ENCODE measurements at regions of chr12 and their contacts with region 1.

Region 1: GRCh38 chr12:9750276-9751203 is 10.2 kb downstream of the CD69 start:
- DNase-seq: peak in 1 of 2 donors; percentile 87
- ATAC-seq: peak; percentile 41 to 80 (median 68)
- H3K4me3 ChIP-seq: no peak overlapping the region
- H3K4me3 Mint-ChIP-seq: peak overlapping the region; percentile 74
- H3K27ac ChIP-seq: no peak overlapping the region
- H3K27ac Mint-ChIP-seq: peak overlapping the region in 1 of 2 donors; percentile 100
- H3K4me1 ChIP-seq: peaks cover 16% of the 10 kb centered on the region
- H3K4me1 Mint-ChIP-seq: peaks cover 19 to 35% of the 10 kb centered on the region in 2 donors
- H3K27me3 ChIP-seq: no peaks in the 10 kb centered on the region
- H3K27me3 Mint-ChIP-seq: no peaks in the 10 kb centered on the region
- CTCF ChIP-seq: peak; percentile 87

Region 2: GRCh38 chr12:9797722-9798619 is 47.4 kb after region 1 on chr12:
- intact Hi-C with region 1: loop called (anchors 1 kb)
- DNase-seq: peak in 1 of 2 donors; percentile 89
- ATAC-seq: peak; percentile 90 to 94 (median 94)
- H3K4me3 ChIP-seq: no peak overlapping the region
- H3K4me3 Mint-ChIP-seq: peak overlapping the region; percentile 43
- H3K27ac ChIP-seq: no peak overlapping the region
- H3K27ac Mint-ChIP-seq: peak overlapping the region; percentile 30 to 43
- H3K4me1 ChIP-seq: peaks cover 6% of the 10 kb centered on the region
- H3K4me1 Mint-ChIP-seq: peaks cover 42 to 43% of the 10 kb centered on the region in 2 donors
- H3K27me3 ChIP-seq: no peaks in the 10 kb centered on the region
- H3K27me3 Mint-ChIP-seq: peaks cover 0 to 4% of the 10 kb centered on the region in 2 donors
- CTCF ChIP-seq: peak; percentile 61

Region 3: GRCh38 chr12:9925708-9926393 is 175.3 kb after region 1 on chr12:
- intact Hi-C with region 1: loop called (anchors 1 kb)
- DNase-seq: peak in 1 of 2 donors; percentile 73
- ATAC-seq: peak; percentile 66 to 75 (median 72)
- H3K4me3 ChIP-seq: no peak overlapping the region
- H3K4me3 Mint-ChIP-seq: peak overlapping the region; percentile 83
- H3K27ac ChIP-seq: no peak overlapping the region
- H3K27ac Mint-ChIP-seq: peak overlapping the region; percentile 64 to 76
- H3K4me1 ChIP-seq: peaks cover 2% of the 10 kb centered on the region
- H3K4me1 Mint-ChIP-seq: peaks cover 5 to 7% of the 10 kb centered on the region in 2 donors
- H3K27me3 ChIP-seq: no peaks in the 10 kb centered on the region
- H3K27me3 Mint-ChIP-seq: peaks cover 6 to 11% of the 10 kb centered on the region in 2 donors
- CTCF ChIP-seq: peak; percentile 55

Region 4: GRCh38 chr12:10140001-10140400 is 389.5 kb after region 1 on chr12:
- intact Hi-C with region 1: loop called (anchors 1 kb)
- DNase-seq: peak in 1 of 2 donors; percentile 74
- ATAC-seq: peak; percentile 62 to 66 (median 63)
- H3K4me3 ChIP-seq: no peak overlapping the region
- H3K4me3 Mint-ChIP-seq: no peak overlapping the region
- H3K27ac ChIP-seq: no peak overlapping the region
- H3K27ac Mint-ChIP-seq: no peak overlapping the region
- H3K4me1 ChIP-seq: no peaks in the 10 kb centered on the region
- H3K4me1 Mint-ChIP-seq: no peaks in the 10 kb centered on the region
- H3K27me3 ChIP-seq: peaks cover 4% of the 10 kb centered on the region
- H3K27me3 Mint-ChIP-seq: peaks cover 13 to 16% of the 10 kb centered on the region in 2 donors
- CTCF ChIP-seq: peak; percentile 60